Activated B cell treated with CpG ODN at 0.5 μM for 24 hours (primary cell): ENCODE measurements at regions of chr1 and their contacts with region 1.

Region 1: GRCh38 chr1:156054500-156055280 is at the start of gene LAMTOR2:
- DNase-seq: peak; percentile 94
- ATAC-seq: peak; percentile 73
- H3K4me3 Mint-ChIP-seq: peak within 1 kb of the TSS; percentile 93
- H3K27ac Mint-ChIP-seq: peak within 1 kb of the TSS; percentile 97
- H3K4me1 Mint-ChIP-seq: peaks cover 29% of the 10 kb centered on the region
- H3K27me3 Mint-ChIP-seq: no peaks in the 10 kb centered on the region
- CTCF ChIP-seq: no peak
- total RNA-seq, gene LAMTOR2: 45.9 and 48.0 TPM in 2 replicates

Region 2: DNA sequence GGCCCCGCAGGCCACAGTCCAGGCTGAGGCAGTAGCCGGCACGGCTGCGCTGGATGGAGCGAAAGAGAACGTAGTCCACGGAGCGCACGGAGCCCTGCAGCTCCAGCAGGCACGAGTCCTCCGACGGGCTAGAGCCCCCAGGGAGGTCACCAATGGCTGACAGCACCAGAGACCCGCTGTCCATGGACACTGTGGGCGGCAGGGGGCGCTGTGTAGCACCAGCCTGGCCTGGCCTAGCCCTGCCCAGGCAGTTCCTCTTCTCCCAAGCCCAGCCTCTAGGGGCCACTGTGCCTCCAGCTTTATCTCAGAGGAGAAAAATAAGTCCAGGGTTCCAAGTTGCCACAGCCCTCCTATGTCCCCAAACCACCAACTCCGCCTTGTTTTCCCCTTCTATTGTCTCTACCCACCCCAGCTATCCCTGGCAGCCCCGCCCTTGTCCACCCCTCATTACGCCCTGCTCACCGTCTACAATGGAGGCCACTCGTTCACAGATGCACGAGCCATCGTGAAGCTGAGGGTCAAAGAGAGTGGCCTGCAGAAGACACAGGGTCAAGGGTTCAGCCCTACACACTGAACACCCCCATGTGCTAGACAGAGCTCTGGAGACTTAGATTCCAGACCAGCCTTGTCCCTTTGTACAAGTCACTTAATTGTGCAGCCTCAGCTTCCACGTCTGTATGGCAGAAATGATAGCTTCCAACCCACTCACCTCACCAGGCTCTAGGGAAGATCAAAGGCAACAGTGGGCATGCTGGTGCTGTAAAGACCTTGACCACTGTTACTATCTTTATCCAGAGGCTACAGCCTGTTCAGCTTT is 803.8 kb before region 1 on chr1:
- CTCF ChIA-PET with region 1: no interaction called
- POLR2A ChIA-PET with region 1: no interaction called
- intact Hi-C with region 1: loop called (anchors 10 kb)
- DNase-seq: peak; percentile 95
- ATAC-seq: peak; percentile 96
- H3K4me3 Mint-ChIP-seq: peak overlapping the region; percentile 73
- H3K27ac Mint-ChIP-seq: peak overlapping the region; percentile 39
- H3K4me1 Mint-ChIP-seq: peaks cover 29% of the 10 kb centered on the region
- H3K27me3 Mint-ChIP-seq: no peaks in the 10 kb centered on the region
- CTCF ChIP-seq: peak; percentile 84

Region 3: DNA sequence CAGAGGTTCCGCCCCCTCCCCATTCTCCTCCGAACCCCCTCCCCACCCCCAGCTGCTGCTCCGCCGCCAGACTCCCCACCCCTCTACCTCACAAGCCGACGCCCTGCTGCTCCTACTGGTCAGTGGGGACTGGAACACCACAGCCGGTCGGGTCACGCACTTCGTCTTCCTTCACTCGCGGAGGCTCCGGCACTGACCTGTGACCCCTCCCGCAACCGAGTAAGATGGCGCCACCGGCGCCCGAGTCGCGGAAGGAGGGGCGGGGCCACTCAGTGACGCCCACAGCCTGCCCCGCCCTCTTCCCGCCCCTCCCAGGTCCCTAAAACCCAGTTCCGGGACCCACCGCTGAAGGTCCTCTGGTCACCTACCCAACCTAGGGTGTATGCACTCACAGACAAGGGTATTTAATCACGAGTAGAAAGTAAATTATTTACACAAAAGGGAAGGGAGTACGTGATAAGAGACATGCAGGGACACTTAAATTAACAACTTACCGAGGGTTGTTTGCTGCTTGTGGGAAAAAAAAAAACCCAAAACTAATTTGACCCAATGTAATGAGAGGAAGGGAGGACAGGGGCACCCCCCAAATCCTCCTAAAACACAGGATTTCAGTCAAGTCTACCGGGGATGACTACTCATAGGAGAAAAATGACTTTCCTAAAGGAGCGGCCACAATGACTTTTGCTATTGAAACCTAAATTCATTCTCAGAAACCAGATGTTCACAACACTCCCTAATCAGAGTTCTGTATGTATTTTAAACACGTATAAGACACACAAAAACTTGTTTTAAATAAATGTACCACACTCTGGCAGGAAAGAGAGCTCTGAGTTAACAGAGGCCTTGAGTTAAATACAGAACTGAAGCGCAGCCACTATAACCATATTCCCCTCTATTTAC is 143.3 kb before region 1 on chr1 and contains the start of gene RIT1:
- CTCF ChIA-PET with region 1: no interaction called
- POLR2A ChIA-PET with region 1: interaction called, 7 read pairs
- intact Hi-C with region 1: loop called (anchors 5 kb)
- DNase-seq: peak; percentile 74
- ATAC-seq: peak; percentile 97
- H3K4me3 Mint-ChIP-seq: peak within 1 kb of the TSS; percentile 99
- H3K27ac Mint-ChIP-seq: peak within 1 kb of the TSS; percentile 97
- H3K4me1 Mint-ChIP-seq: peaks cover 22% of the 10 kb centered on the region
- H3K27me3 Mint-ChIP-seq: no peaks in the 10 kb centered on the region
- CTCF ChIP-seq: no peak
- total RNA-seq, gene RIT1: 32.7 and 38.6 TPM in 2 replicates

Region 4: GRCh38 chr1:155978325-155978972 is 76.2 kb before region 1 on chr1 and contains the start of gene ARHGEF2:
- CTCF ChIA-PET with region 1: no interaction called
- POLR2A ChIA-PET with region 1: interaction called, 4 read pairs
- intact Hi-C with region 1: loop called (anchors 5 kb)
- DNase-seq: peak; percentile 80
- ATAC-seq: peak; percentile 75
- H3K4me3 Mint-ChIP-seq: peak within 1 kb of the TSS; percentile 97
- H3K27ac Mint-ChIP-seq: peak within 1 kb of the TSS; percentile 90
- H3K4me1 Mint-ChIP-seq: peaks cover 85% of the 10 kb centered on the region
- H3K27me3 Mint-ChIP-seq: no peaks in the 10 kb centered on the region
- CTCF ChIP-seq: no peak
- total RNA-seq, gene ARHGEF2: 188 and 207 TPM in 2 replicates

Region 5: DNA sequence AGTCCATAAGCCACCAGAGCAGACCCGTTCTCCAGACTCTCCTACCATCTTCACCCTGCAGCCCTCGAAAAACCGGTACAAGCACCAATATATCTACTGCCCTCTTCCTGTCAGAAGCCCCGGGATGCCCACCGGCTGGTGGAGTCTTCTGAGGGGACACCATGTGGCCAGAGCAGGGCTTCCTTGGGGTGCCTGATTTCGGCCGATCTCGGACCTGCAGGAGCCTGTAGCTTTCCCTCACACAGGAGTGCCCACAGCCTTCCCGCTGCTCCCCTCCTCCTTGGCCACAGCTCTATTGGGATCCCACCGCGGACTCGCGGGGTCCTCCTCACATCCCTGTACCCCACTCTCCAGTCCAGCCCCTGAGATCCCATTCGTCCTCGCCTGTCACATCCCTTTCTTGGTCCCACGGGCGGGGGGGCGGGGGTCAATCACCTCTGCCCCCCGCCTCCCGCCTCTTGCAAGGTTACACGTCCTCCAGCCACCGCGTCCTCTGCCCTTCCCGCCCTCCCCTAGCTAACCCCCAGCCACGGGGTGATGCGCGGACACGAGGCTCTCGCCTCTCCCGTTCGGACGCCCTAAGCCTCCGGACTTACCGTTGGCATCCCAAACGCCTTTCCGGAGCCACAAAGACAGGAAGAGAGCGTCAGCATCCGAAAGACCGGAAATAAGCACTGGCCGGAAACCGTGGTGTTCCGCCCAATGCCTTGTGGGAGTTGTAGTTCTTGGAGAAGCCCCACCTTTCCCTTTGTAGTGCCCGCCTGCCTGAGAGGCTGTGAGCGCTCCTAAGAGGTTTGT is 34.2 kb before region 1 on chr1 and contains the start of gene SSR2:
- CTCF ChIA-PET with region 1: interaction called, 4 read pairs
- POLR2A ChIA-PET with region 1: interaction called, 5 read pairs
- intact Hi-C with region 1: loop called (anchors 1 kb)
- DNase-seq: peak; percentile 65
- ATAC-seq: peak; percentile 99
- H3K4me3 Mint-ChIP-seq: peak within 1 kb of the TSS; percentile 98
- H3K27ac Mint-ChIP-seq: peak within 1 kb of the TSS; percentile 93
- H3K4me1 Mint-ChIP-seq: peaks cover 22% of the 10 kb centered on the region
- H3K27me3 Mint-ChIP-seq: peaks cover 5% of the 10 kb centered on the region
- CTCF ChIP-seq: no peak
- total RNA-seq, gene SSR2: 136 and 146 TPM in 2 replicates

Region 6: GRCh38 chr1:156193488-156194299 is 139.0 kb after region 1 on chr1 and contains the start of gene SLC25A44:
- CTCF ChIA-PET with region 1: no interaction called
- POLR2A ChIA-PET with region 1: no interaction called
- intact Hi-C with region 1: loop called (anchors 1 kb)
- DNase-seq: peak; percentile 93
- ATAC-seq: peak; percentile 98
- H3K4me3 Mint-ChIP-seq: peak within 1 kb of the TSS; percentile 96
- H3K27ac Mint-ChIP-seq: peak within 1 kb of the TSS; percentile 91
- H3K4me1 Mint-ChIP-seq: peaks cover 38% of the 10 kb centered on the region
- H3K27me3 Mint-ChIP-seq: no peaks in the 10 kb centered on the region
- CTCF ChIP-seq: no peak
- total RNA-seq, gene SLC25A44: 17.9 and 26.4 TPM in 2 replicates

Region 7: GRCh38 chr1:156338180-156338973 is 283.7 kb after region 1 on chr1 and contains the starts of genes CCT3 and TSACC:
- CTCF ChIA-PET with region 1: no interaction called
- POLR2A ChIA-PET with region 1: no interaction called
- intact Hi-C with region 1: loop called (anchors 1 kb)
- DNase-seq: peak; percentile 99
- ATAC-seq: peak; percentile 95
- H3K4me3 Mint-ChIP-seq: peak within 1 kb of the TSS; percentile 97
- H3K27ac Mint-ChIP-seq: peak within 1 kb of the TSS; percentile 97
- H3K4me1 Mint-ChIP-seq: peaks cover 40% of the 10 kb centered on the region
- H3K27me3 Mint-ChIP-seq: no peaks in the 10 kb centered on the region
- CTCF ChIP-seq: no peak
- total RNA-seq, gene CCT3: 255 and 260 TPM in 2 replicates
- total RNA-seq, gene TSACC: 0.44 TPM in 1 of 2 replicates, not detected in the other